ENCODE measurements at regions of chr19 and their contacts with region 1.

Region 1: GRCh38 chr19:17762505-17763229 is 11.4 kb downstream of the FCHO1 start:
- DNase-seq: peak; percentile 87
- H3K4me3 ChIP-seq: peak overlapping the region in 1 of 2 experiments; percentile 19; a peak in 1 of 4 replicates
- H3K27ac ChIP-seq: peak overlapping the region in 1 of 2 experiments; percentile 78; a peak in 2 of 4 replicates
- H3K4me1 ChIP-seq: no peaks in the 10 kb centered on the region; a peak in 1 of 4 replicates
- H3K27me3 ChIP-seq: no peaks in the 10 kb centered on the region
- CTCF ChIP-seq: no peak
- EP300 ChIP-seq: no peak
- RAD21 ChIP-seq: no peak

Region 2: GRCh38 chr19:17718947-17719711 is 43.5 kb before region 1 on chr19 and contains the start of gene MAP1S:
- CTCF ChIA-PET with region 1: no interaction called
- POLR2A ChIA-PET with region 1: no interaction called
- DNase-seq: peak; percentile 98
- H3K4me3 ChIP-seq: peak within 1 kb of the TSS; percentile 74 to 82
- H3K27ac ChIP-seq: peak within 1 kb of the TSS in 1 of 2 experiments; percentile 54; a peak in 1 of 4 replicates
- H3K4me1 ChIP-seq: peaks cover 16 to 20% of the 10 kb centered on the region in 2 experiments; a peak in 2 of 4 replicates
- H3K27me3 ChIP-seq: no peaks in the 10 kb centered on the region
- CTCF ChIP-seq: no peak
- EP300 ChIP-seq: no peak
- RAD21 ChIP-seq: no peak
- polyA plus RNA-seq, gene MAP1S: 7.8 and 18.4 TPM in 2 replicates

Region 3: DNA sequence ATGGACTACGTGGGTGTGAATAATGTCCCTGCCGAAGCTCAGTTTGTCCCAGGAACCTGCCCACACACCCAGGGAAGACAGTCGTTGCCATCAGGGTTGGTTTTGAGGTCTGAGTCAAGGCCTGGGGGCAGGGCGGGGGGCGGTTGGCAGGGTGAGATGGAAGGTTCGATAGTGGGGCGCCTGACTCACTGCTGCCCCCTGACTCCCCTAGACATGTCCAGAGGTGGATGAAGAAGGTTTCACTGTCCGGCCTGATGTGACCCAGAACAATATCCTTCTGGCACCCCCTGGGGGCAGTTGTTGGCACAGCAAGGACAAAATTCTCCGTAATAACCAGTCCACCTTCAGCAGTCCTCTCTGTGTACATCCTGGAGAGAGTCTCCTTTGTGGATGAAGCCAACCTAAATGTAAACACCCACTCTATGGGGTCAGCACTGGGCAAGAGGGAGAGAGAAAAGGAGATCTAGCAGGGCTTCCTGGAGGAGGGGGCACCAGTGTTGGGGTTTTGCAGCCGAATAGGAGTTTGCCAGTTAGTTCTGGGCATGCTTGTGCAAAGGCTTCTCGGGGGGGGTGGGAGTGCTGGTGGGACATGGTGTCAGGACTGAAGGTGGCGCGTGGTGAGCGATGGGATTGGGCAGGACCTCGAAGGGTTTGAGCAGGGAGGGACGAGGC is 12.7 kb after region 1 on chr19:
- CTCF ChIA-PET with region 1: interaction called, 21 read pairs
- POLR2A ChIA-PET with region 1: no interaction called
- DNase-seq: peak; percentile 76
- H3K4me3 ChIP-seq: no peak overlapping the region; a peak in 1 of 4 replicates
- H3K27ac ChIP-seq: no peak overlapping the region
- H3K4me1 ChIP-seq: no peaks in the 10 kb centered on the region
- H3K27me3 ChIP-seq: no peaks in the 10 kb centered on the region
- CTCF ChIP-seq: peak; percentile 76
- EP300 ChIP-seq: no peak
- RAD21 ChIP-seq: peak; percentile 75

Region 4: DNA sequence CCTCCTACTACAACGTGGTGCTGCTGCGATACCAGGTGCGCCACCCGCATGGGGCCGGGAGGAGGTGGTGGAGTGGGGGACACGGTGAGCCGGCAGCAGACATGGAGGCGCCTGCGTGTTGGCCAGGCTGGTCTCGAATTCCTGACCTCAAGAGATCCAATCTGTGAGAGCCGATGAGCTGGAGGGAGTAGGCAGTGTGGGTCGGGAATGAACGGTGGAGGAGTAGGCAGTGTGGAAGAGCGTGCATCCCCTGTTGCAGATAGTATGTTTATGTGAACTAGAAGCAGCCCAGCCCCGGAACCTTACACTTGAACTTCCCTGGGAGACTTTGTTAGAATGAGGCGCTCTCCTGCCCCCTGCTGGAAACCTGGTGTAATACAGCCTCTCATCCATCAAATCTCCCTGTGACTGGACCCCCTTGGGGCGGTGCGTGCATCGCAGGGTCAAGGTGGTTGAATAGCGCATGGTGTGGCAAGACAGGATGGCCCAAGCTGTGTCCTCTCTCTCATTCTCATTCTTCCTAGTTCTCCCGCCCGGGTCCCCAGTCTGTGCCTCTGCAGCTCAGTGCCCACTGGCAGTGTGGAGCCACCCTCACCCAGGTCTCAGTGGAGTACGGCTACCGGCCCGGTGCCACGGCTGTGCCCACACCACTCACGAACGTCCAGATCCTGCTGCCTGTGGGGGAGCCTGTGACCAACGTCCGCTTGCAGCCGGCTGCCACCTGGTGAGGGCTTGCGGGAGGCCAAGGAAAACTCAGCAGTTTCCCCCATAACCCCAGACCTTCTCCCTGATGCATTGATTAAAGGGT is 21.7 kb after region 1 on chr19:
- CTCF ChIA-PET with region 1: interaction called, 10 read pairs
- POLR2A ChIA-PET with region 1: no interaction called
- DNase-seq: peak; percentile 93
- H3K4me3 ChIP-seq: no peak overlapping the region; a peak in 1 of 4 replicates
- H3K27ac ChIP-seq: no peak overlapping the region
- H3K4me1 ChIP-seq: peaks cover 0 to 3% of the 10 kb centered on the region in 2 experiments; a peak in 1 of 4 replicates
- H3K27me3 ChIP-seq: no peaks in the 10 kb centered on the region
- CTCF ChIP-seq: peak; percentile 83
- EP300 ChIP-seq: no peak
- RAD21 ChIP-seq: peak; percentile 85

Region 5: GRCh38 chr19:17883627-17884410 is 121.2 kb after region 1 on chr19:
- CTCF ChIA-PET with region 1: no interaction called
- POLR2A ChIA-PET with region 1: no interaction called
- DNase-seq: peak; percentile 77
- H3K4me3 ChIP-seq: no peak overlapping the region
- H3K27ac ChIP-seq: no peak overlapping the region
- H3K4me1 ChIP-seq: no peaks in the 10 kb centered on the region
- H3K27me3 ChIP-seq: peaks cover 29% of the 10 kb centered on the region
- CTCF ChIP-seq: no peak
- EP300 ChIP-seq: no peak
- RAD21 ChIP-seq: no peak